ENCODE measurements at regions of chr9 and their contacts with region 1.

Region 1: DNA sequence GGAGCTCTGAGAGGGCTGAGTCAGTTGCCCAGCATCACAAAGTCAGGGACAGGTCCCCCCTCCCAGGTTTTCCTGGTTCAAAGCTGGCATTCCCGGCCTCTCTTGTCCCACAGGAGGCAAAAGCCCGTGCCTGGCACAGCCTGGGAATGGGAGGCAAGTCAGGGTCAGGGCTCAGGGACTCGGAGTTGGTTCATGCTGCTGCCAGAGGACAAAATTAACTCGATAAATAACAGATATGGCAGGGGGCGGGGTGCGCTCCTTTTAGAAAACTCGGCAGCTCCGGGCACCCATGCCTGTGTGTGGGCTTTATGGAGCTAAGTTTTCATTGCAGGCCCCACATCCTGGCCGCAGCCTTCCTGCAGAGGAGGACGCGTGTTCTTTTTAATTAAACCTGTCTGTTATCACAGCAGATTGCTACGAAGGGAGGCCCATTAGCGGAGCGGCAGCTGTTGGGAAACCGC is 62.8 kb upstream of the LMX1B start:
- DNase-seq: no peak
- ATAC-seq: no peak
- H3K4me3 ChIP-seq: no peak overlapping the region
- H3K27ac ChIP-seq: no peak overlapping the region
- H3K4me1 ChIP-seq: no peaks in the 10 kb centered on the region
- H3K27me3 ChIP-seq: peaks cover 34% of the 10 kb centered on the region
- CTCF ChIP-seq: no peak
- POLR2A ChIP-seq: no peak
- RAD21 ChIP-seq: no peak

Region 2: DNA sequence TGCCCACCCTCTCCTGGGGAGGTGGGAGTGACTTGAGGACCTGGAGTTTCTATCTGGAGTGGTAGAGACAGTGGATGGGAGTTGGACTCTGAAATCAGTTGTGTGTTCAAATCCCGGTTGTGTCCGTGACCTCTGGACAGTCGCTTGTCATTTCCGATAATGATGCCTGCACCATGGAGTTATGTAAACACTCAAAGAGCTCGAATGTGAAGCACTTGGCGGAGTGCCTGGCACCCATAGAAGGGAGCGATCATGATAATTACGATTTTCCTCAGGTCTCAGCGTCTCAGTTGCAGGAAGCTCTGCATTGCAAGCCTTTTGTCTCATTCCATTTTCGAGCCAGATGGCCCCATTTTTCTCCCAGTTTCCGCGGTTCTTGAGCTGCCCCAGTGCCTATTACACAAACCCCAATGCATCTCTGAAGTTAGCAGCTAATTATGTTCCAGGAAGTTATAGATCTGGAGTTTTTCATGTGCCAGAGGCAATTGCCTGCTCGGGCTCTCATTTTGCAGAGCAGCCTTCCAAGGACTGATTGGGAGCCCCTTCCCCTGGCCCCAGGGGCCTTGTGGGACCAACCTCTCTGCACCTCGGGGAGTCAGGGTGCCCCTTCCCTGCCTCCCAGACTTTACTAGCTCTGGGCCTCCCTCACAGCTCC is 399.8 kb before region 1 on chr9:
- CTCF ChIA-PET with region 1: no interaction called
- POLR2A ChIA-PET with region 1: no interaction called
- dilution Hi-C with region 1: no loop called
- in situ Hi-C with region 1: no loop called
- intact Hi-C with region 1: no loop called
- DNase-seq: no peak
- ATAC-seq: no peak
- H3K4me3 ChIP-seq: no peak overlapping the region
- H3K27ac ChIP-seq: no peak overlapping the region
- H3K4me1 ChIP-seq: no peaks in the 10 kb centered on the region
- H3K27me3 ChIP-seq: peaks cover 34% of the 10 kb centered on the region
- CTCF ChIP-seq: no peak
- POLR2A ChIP-seq: no peak
- RAD21 ChIP-seq: no peak

Region 3: DNA sequence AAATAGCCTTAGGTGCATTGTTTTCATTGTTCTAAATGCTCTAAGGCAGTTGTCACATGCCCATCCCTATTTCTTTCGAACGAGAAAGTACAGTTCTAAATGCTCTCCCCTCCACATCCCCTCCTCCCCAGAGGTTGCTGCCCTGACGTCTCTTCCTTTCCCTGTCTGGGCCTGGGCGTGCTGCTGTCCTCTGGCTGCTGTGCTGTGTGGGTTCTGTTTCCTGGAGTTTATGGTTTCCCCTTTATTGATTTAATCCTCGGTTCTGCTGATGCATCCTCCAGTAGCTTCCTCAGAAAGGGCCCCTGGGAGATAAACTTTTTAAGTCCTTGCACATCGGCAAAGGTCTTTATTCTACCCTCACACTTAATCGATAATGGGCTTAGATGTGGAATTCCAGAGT is 175.5 kb before region 1 on chr9:
- CTCF ChIA-PET with region 1: no interaction called
- POLR2A ChIA-PET with region 1: no interaction called
- dilution Hi-C with region 1: no loop called
- in situ Hi-C with region 1: no loop called
- intact Hi-C with region 1: no loop called
- DNase-seq: peak; percentile 20
- ATAC-seq: peak; percentile 65
- H3K4me3 ChIP-seq: no peak overlapping the region
- H3K27ac ChIP-seq: peak overlapping the region; percentile 4; the same call in 1 of the 2 replicates
- H3K4me1 ChIP-seq: peaks cover 13% of the 10 kb centered on the region
- H3K27me3 ChIP-seq: no peaks in the 10 kb centered on the region
- CTCF ChIP-seq: no peak
- POLR2A ChIP-seq: no peak
- RAD21 ChIP-seq: no peak

Region 4: GRCh38 chr9:126532019-126532462 is 18.9 kb before region 1 on chr9:
- CTCF ChIA-PET with region 1: no interaction called
- POLR2A ChIA-PET with region 1: interaction called, 16 read pairs
- dilution Hi-C with region 1: no loop called
- in situ Hi-C with region 1: no loop called
- intact Hi-C with region 1: no loop called
- DNase-seq: no peak
- ATAC-seq: peak; percentile 47; the same call in 1 of the 2 replicates
- H3K4me3 ChIP-seq: no peak overlapping the region
- H3K27ac ChIP-seq: no peak overlapping the region
- H3K4me1 ChIP-seq: no peaks in the 10 kb centered on the region; the same call in 1 of the 2 replicates
- H3K27me3 ChIP-seq: peaks cover 78% of the 10 kb centered on the region
- CTCF ChIP-seq: no peak
- POLR2A ChIP-seq: no peak
- RAD21 ChIP-seq: no peak

Measured in IMR-90 (cell line).